Sciatic nerve (tissue), 2 donors: ENCODE measurements at regions of chr2 and their contacts with region 1.

Region 1: GRCh38 chr2:109254174-109254904 is 125.3 kb downstream of the SH3RF3 start:
- DNase-seq: no peak
- ATAC-seq: no peak

Region 2: GRCh38 chr2:109230941-109231420 is 23.4 kb before region 1 on chr2:
- intact Hi-C with region 1: loop called (anchors 1 kb)
- DNase-seq: no peak
- ATAC-seq: peak; percentile 68

Region 3: DNA sequence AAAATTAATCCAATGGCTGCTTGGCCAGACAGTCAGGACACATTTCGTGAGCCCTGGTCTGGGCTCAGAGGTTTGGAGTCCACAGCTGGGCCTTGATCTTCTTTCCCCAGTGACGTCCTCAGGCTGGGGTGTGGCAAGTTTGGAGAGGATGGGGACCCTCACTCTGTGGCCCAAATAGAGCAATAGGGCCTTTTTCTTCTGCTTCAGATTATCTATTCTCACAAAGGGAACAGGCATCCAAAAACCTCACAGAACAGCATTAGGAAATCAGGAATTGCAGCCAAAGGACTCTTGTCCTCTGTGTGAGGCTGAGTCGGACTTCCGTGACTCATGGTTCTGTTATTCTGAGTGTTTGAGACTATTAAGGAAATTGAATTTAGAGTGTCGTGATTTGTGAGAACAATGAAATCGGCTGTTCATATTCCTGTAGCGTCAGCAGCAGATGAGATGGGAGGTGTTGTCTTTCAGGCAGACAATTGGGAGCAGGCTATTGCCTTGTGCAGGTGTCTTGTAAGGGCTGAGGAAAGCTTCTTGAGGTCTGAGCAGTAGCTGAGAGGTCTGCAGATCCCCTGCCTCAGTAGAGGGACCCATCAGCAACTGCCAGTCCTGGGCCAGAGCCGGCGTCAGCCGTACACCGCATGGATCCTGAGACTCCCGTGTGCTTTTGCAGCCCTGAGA is 11.5 kb before region 1 on chr2:
- intact Hi-C with region 1: no loop called
- DNase-seq: no peak
- ATAC-seq: peak; percentile 81

Region 4: GRCh38 chr2:109318150-109318948 is 64.0 kb after region 1 on chr2:
- intact Hi-C with region 1: no loop called
- DNase-seq: peak; percentile 88
- ATAC-seq: peak; percentile 87